MCF 10A (cell line): ENCODE measurements at regions of chr11 and their contacts with region 1.

Region 1: GRCh38 chr11:67053896-67054842 is 2.5 kb upstream of the RHOD start:
- DNase-seq: peak; percentile 81
- H3K4me3 Mint-ChIP-seq: no peak overlapping the region
- H3K27ac Mint-ChIP-seq: peak overlapping the region; percentile 85
- H3K4me1 Mint-ChIP-seq: peaks cover 20% of the 10 kb centered on the region
- H3K27me3 Mint-ChIP-seq: no peaks in the 10 kb centered on the region
- CTCF ChIP-seq: peak; percentile 88

Region 2: DNA sequence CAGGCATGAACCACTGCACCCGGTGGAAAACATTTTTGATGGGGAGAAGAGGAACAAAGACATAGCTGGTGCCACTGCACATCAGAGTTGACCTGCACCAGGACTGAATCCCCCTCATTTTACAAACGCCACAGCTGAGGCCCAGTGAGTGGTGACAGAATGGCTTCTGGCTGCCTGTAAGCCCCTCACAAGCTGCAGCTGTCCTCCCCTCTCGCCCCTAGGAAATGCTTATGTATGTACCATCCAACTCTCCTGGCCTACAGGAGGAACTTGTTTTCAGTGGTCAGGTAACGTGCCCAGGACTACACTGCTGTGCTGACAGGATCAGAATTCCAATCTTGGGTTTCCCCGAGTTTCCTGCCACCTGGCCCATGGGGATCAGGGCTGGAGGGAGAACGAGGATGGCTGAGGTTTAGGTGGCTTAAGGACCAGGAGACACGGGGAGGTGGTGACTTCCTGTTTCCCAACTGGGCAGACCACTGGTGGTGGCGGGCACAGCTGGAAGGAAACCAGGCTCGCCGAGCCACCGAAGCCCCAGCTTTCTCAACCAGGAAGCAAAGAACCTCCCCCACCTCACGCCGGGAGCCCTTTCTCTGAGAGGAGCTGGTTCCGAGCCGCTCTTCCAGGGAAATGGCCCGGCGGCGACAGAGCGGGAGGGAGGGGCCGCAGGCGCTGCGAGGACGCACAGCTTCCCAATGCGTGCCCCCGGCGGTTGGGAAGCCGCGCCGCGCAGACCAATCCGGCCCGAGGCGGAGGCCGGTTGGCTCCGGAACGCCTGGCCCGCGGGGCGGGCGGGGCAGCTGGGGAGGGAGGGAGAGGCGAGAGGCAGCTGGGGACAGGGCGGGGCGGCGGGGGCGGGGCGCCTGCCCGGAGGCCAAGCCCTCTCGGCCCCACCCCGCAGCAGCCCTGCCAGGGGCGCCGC is 198.3 kb before region 1 on chr11:
- CTCF ChIA-PET with region 1: no interaction called
- POLR2A ChIA-PET with region 1: interaction called, 6 read pairs
- intact Hi-C with region 1: loop called (anchors 10 kb)
- DNase-seq: peak; percentile 85
- H3K4me3 Mint-ChIP-seq: peak overlapping the region; percentile 86
- H3K27ac Mint-ChIP-seq: no peak overlapping the region
- H3K4me1 Mint-ChIP-seq: peaks cover 6% of the 10 kb centered on the region
- H3K27me3 Mint-ChIP-seq: no peaks in the 10 kb centered on the region
- CTCF ChIP-seq: no peak

Region 3: GRCh38 chr11:66958232-66958955 is 95.8 kb before region 1 on chr11 and contains the start of gene PC:
- CTCF ChIA-PET with region 1: interaction called, 4 read pairs
- POLR2A ChIA-PET with region 1: interaction called, 23 read pairs
- intact Hi-C with region 1: no loop called
- DNase-seq: peak; percentile 100
- H3K4me3 Mint-ChIP-seq: peak within 1 kb of the TSS; percentile 65
- H3K27ac Mint-ChIP-seq: peak within 1 kb of the TSS; percentile 70
- H3K4me1 Mint-ChIP-seq: peaks cover 30% of the 10 kb centered on the region
- H3K27me3 Mint-ChIP-seq: no peaks in the 10 kb centered on the region
- CTCF ChIP-seq: no peak
- total RNA-seq, gene PC: 27.0 and 37.7 TPM in 2 replicates

Region 4: GRCh38 chr11:67071420-67072284 is 17.5 kb after region 1 on chr11:
- CTCF ChIA-PET with region 1: interaction called, 30 read pairs
- POLR2A ChIA-PET with region 1: interaction called, 6 read pairs
- intact Hi-C with region 1: no loop called
- DNase-seq: peak; percentile 17
- H3K4me3 Mint-ChIP-seq: no peak overlapping the region
- H3K27ac Mint-ChIP-seq: no peak overlapping the region
- H3K4me1 Mint-ChIP-seq: peaks cover 5% of the 10 kb centered on the region
- H3K27me3 Mint-ChIP-seq: no peaks in the 10 kb centered on the region
- CTCF ChIP-seq: peak; percentile 27

Region 5: DNA sequence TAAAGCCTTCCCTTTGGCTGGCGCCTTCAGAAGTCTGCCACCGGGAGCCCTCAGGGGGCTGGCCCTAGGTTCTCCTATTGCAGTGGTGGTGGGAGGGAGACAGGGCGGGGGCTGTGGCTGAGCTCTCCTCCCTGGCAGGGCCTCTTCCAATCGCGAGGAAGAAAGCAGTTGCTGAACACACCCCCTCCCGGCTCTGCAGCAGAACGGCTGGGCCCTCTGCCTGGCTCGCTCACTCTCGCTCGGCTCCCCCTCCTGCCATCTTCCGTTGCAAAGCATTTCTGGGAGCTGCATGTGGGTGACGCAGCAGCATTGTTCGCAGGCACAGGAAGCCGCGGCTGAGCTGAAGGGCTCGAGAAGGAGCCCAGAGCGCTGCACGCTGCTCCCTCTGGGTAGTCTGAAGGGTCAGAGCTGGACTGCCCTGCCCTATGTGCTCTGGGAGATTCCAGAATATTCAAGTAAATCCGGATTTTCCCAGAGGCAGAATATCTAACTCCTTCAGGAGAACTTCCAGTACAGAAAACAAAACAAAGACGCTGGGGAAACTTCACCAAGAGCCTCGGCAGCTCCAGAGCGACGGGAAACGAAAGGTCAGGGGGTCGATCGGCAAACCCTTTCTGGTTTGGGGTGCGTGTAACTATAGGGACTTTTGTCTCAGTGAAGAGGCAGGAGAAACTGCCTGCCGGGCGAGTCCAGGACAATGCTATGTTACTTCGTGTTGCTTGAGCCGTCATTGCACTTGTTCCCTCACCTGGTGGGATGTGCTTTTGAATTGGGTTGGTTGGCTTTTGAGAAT is 185.8 kb after region 1 on chr11:
- CTCF ChIA-PET with region 1: interaction called, 5 read pairs
- POLR2A ChIA-PET with region 1: interaction called, 33 read pairs
- intact Hi-C with region 1: loop called (anchors 2 kb)
- DNase-seq: peak; percentile 98
- H3K4me3 Mint-ChIP-seq: peak overlapping the region; percentile 96
- H3K27ac Mint-ChIP-seq: peak overlapping the region; percentile 97
- H3K4me1 Mint-ChIP-seq: peaks cover 24% of the 10 kb centered on the region
- H3K27me3 Mint-ChIP-seq: no peaks in the 10 kb centered on the region
- CTCF ChIP-seq: no peak

Region 6: DNA sequence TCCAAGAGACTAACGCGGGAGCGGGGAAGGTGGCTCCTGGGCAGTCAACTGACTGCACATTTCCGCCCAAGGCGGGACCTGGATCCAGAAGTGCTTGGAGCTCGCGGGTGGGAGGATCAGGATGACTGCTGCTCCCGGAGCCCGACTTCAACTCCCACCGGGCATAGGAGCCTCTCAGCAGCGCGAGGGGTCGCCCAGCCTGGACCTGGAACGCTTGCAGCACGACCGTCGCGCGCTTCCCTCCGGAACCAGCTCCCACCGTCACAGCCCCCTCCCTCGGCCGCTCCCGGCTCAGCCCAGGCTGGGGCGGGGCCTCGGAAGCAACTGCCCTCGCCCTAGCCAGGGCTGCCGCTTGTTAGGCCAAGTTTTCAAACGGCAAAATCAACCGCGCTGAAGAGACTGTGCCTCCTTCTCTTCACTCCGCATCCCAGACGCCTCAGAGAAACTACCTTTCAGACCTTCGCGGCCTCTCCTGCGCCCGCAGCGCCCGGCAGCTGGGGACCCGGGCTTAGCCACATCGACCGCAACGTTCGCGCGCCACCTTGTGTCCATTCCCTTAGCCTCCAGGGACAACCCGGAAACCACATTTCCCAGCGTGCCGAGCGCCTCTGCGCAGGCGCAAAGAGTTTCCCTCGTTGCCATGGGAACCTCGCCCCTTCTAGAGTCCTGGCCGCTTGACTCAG is 263.2 kb after region 1 on chr11:
- CTCF ChIA-PET with region 1: interaction called, 13 read pairs
- POLR2A ChIA-PET with region 1: interaction called, 12 read pairs
- intact Hi-C with region 1: loop called (anchors 1 kb)
- DNase-seq: peak; percentile 97
- H3K4me3 Mint-ChIP-seq: peak overlapping the region; percentile 99
- H3K27ac Mint-ChIP-seq: peak overlapping the region; percentile 93
- H3K4me1 Mint-ChIP-seq: peaks cover 28% of the 10 kb centered on the region
- H3K27me3 Mint-ChIP-seq: no peaks in the 10 kb centered on the region
- CTCF ChIP-seq: peak; percentile 87